Endothelial cell of umbilical vein (primary cell): ENCODE measurements at regions of chr12 and their contacts with region 1.

Region 1: DNA sequence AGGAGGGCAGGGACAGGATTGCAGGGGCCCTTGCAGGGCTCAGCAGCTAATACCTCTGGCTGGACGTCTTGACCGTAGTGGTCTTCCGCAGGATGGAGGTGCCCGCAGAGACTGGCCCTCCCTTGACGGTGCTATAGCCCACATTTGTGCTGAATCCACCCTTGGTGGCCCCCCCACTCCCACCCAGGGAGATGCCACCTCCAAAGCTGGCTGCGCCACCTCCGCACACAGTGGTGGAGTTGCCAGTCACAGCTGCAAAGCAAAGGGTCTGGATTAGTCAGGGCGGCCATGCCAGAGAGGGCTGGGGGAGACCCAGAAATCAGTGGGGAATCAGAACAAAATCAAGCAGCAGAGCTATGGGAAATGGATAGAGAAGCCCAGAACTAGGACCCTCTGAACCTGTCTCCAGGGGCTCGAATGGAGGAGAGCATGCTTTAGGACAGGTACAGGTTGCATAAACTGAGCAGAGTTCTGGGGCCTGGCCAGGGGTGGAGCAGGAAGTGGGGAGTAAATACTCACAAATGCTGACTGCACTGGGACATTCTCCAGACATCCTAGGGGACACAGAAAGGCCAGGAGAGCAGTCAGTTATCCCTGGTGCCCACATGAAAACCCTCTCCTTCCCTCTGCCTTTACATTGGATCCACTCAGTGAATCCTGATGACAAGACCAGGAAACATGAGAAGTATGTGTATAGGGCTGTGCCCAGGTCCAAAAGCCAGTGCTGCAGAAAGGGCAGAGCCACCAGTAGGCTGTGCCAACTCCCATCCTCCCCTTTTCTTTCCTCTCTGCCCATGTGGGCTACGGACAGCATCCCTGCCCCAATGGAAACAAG is 8.1 kb upstream of the KRT4 start:
- DNase-seq: no peak
- H3K4me3 ChIP-seq: no peak overlapping the region
- H3K27ac ChIP-seq: no peak overlapping the region
- H3K4me1 ChIP-seq: no peaks in the 10 kb centered on the region
- H3K27me3 ChIP-seq: peaks cover 0 to 1% of the 10 kb centered on the region in 2 experiments
- CTCF ChIP-seq: no peak
- POLR2A ChIP-seq: no peak

Region 2: GRCh38 chr12:52295663-52296062 is 526.4 kb before region 1 on chr12:
- CTCF ChIA-PET with region 1: no interaction called
- POLR2A ChIA-PET with region 1: no interaction called
- dilution Hi-C with region 1: no loop called
- intact Hi-C with region 1: loop called (anchors 5 kb)
- DNase-seq: no peak
- H3K4me3 ChIP-seq: no peak overlapping the region
- H3K27ac ChIP-seq: no peak overlapping the region
- H3K4me1 ChIP-seq: no peaks in the 10 kb centered on the region
- H3K27me3 ChIP-seq: peaks cover 39 to 58% of the 10 kb centered on the region in 2 experiments
- CTCF ChIP-seq: no peak
- POLR2A ChIP-seq: no peak

Region 3: DNA sequence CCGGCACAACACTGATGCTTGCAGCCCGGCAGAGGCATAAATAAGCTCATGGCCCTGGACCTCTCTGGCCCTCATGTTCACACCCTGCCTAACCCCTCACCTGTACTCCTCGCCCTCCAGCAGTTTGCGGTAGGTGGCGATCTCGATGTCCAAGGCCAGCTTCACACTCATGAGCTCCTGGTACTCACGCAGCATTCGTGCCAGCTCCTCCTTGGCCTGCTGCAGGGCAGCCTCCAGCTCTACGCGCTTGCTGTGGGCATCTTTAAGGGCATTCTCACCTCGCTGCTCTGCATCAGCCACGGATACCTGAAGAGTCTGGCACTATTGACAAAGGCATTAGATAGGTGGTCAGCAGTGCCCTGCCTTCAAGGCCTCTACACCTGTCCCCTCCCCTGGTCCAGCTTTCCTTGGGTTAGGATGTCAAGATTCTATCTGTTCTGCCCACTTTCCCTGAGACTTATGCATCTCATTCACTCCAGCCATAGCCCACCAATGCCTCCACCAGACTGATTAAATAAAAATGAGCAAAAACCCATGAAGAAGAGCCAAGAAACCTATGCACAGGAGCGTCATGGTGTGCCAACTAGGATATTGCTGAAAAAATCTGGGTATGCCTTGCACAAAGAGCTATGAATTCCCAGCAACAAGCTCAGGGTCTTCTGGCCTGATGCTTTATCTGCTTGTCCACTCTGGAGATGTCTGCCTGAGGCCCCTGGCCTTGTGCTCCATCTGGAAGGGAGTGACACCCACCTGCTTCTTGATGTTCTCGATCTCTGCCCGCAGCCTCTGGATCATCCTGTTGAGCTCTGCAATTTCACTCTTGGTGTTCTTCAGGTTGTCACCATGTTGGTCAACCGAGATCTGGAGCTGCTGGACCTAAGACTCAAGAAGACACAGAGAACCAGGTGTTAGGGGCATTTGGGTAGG is 14.2 kb before region 1 on chr12:
- CTCF ChIA-PET with region 1: no interaction called
- POLR2A ChIA-PET with region 1: no interaction called
- dilution Hi-C with region 1: no loop called
- intact Hi-C with region 1: no loop called
- DNase-seq: no peak
- H3K4me3 ChIP-seq: no peak overlapping the region
- H3K27ac ChIP-seq: no peak overlapping the region
- H3K4me1 ChIP-seq: no peaks in the 10 kb centered on the region
- H3K27me3 ChIP-seq: no peaks in the 10 kb centered on the region
- CTCF ChIP-seq: no peak
- POLR2A ChIP-seq: no peak